ENCODE measurements at regions of chr22 and their contacts with region 1.

Region 1: DNA sequence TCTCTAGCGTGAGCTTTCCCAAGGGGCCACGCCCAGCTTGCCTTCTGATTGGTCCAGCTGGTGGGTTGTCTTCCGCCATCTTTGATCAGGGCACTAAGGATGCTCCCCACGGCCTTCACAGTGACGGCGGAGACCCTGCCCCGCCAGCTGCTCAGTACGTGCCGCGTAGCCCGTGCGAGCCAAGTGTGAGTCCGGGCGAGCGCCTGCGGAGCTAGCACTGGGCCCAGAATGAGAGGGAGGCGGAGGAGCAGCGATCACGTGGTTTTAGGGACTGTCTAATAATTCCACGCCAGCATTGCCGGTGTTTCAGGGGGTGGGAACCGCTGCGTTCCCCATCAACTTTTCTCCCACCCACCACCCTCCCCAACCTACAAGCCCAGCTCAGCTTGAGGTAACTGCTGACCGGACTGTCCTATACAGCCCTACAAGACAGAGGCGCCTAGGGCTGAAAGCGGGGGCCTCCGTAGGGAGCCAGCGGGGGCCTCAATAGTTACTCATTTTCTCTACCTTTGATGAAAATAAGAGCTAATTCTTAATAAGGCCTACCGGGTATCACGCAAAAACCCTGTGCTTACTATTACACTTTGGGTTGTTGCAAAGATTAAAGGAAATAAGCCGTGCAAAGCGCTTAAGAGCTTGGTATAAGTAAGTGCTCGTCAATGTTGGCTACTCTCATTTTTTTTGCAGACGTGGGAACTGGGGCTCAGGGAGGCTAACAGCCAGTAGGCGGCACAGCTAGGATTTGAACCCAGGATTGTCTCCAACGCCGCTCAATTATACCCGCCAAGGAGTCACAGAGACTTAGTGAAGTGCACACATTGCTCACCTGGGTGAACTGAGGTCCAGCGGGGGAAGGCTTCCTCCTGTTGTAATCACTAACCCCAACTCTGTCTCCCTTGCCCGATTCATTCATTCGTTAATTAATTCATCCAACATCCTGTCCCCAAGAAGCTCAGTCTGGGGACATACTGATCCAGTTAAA is 1.3 kb upstream of the MTFP1 start:
- DNase-seq: peak; percentile 99
- H3K4me3 Mint-ChIP-seq: peak overlapping the region; percentile 99
- H3K27ac Mint-ChIP-seq: peak overlapping the region; percentile 99
- H3K4me1 Mint-ChIP-seq: peaks cover 61% of the 10 kb centered on the region
- H3K27me3 Mint-ChIP-seq: no peaks in the 10 kb centered on the region

Region 2: GRCh38 chr22:29603358-29604075 is 820.8 kb before region 1 on chr22 and contains the start of gene NF2:
- intact Hi-C with region 1: loop called (anchors 10 kb)
- DNase-seq: peak; percentile 100
- H3K4me3 Mint-ChIP-seq: peak within 1 kb of the TSS; percentile 91
- H3K27ac Mint-ChIP-seq: peak within 1 kb of the TSS; percentile 98
- H3K4me1 Mint-ChIP-seq: peaks cover 14% of the 10 kb centered on the region
- H3K27me3 Mint-ChIP-seq: no peaks in the 10 kb centered on the region
- total RNA-seq, gene NF2: 59.1 and 61.9 TPM in 2 replicates

Region 3: DNA sequence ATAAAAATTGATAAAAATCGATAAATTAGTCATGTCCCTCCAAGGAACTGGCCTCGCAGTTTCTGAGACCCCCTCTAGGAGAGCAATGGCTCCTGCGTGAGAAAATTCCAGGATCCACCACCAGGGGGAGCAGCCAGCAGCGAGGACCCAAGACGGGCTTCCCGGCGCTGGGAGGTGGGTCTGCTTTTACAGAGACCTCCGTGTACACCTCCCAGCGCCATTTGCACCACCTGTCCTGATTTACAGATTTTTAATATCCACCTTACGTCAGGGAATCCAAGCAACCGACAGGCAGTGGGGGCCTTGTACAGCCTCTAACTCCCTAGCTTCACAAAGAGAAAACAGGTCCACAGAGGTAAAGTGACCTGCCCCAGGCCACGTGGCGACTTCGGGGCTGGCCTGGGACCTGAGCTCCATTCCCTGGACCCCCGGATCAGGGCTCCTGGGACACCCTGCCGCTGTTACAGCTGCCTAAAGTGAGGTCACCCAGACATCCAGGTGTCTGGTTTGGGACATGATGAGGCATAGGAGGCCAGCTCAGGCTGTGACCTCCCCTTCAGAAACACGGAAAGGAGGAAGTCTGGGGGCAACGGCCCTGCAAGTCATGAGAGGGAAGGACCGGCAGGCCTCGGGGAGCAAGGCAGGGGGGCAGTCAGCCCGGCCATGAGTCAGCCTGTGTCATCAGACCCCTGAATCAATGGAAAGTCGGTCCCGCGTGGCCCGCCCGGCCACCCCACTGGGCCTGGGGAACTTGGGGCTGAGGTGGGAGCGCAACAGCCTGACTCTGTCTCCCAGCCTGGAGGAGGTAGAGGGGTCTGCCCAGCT is 161.1 kb before region 1 on chr22:
- intact Hi-C with region 1: loop called (anchors 1 kb)
- DNase-seq: peak; percentile 95
- H3K4me3 Mint-ChIP-seq: peak overlapping the region; percentile 99
- H3K27ac Mint-ChIP-seq: peak overlapping the region; percentile 90
- H3K4me1 Mint-ChIP-seq: peaks cover 59% of the 10 kb centered on the region
- H3K27me3 Mint-ChIP-seq: no peaks in the 10 kb centered on the region

Region 4: GRCh38 chr22:30386960-30387827 is 37.1 kb before region 1 on chr22 and contains the start of gene RNF215:
- intact Hi-C with region 1: loop called (anchors 1 kb)
- DNase-seq: peak; percentile 96
- H3K4me3 Mint-ChIP-seq: peak within 1 kb of the TSS; percentile 86
- H3K27ac Mint-ChIP-seq: peak within 1 kb of the TSS; percentile 79
- H3K4me1 Mint-ChIP-seq: peaks cover 19% of the 10 kb centered on the region
- H3K27me3 Mint-ChIP-seq: no peaks in the 10 kb centered on the region
- total RNA-seq, gene RNF215: 10.4 and 15.2 TPM in 2 replicates

Region 5: GRCh38 chr22:30435674-30436126 is 11.4 kb after region 1 on chr22:
- intact Hi-C with region 1: loop called (anchors 1 kb)
- DNase-seq: peak; percentile 90
- H3K4me3 Mint-ChIP-seq: peak overlapping the region; percentile 79
- H3K27ac Mint-ChIP-seq: peak overlapping the region; percentile 94
- H3K4me1 Mint-ChIP-seq: peaks cover 21% of the 10 kb centered on the region
- H3K27me3 Mint-ChIP-seq: peaks cover 8% of the 10 kb centered on the region

Region 6: DNA sequence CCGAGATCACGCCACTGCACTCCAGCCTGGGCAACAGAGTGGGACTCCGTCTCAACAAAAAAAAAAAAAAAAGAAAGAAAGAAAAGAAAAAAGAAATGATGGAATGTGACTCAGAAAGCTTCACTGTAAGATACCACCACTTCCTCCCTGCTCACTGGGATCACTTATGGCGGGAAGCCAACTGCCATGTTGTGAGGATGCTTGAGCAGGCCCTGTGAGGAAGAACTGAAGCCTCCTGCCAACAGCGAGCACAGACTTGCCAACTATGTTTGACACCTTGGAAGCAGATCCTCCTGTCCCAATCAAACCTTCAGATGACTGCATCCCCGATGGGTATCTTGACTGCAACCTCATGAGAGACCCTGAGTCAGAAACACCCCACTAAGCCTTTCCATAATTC is 114.0 kb after region 1 on chr22:
- intact Hi-C with region 1: no loop called
- DNase-seq: no peak
- H3K4me3 Mint-ChIP-seq: no peak overlapping the region
- H3K27ac Mint-ChIP-seq: no peak overlapping the region
- H3K4me1 Mint-ChIP-seq: peaks cover 2% of the 10 kb centered on the region
- H3K27me3 Mint-ChIP-seq: peaks cover 24% of the 10 kb centered on the region

Region 7: GRCh38 chr22:30591588-30592359 is 167.5 kb after region 1 on chr22 and contains the start of gene PES1:
- intact Hi-C with region 1: loop called (anchors 1 kb)
- DNase-seq: peak; percentile 98
- H3K4me3 Mint-ChIP-seq: no peak within 1 kb of the TSS
- H3K27ac Mint-ChIP-seq: no peak within 1 kb of the TSS
- H3K4me1 Mint-ChIP-seq: no peaks in the 10 kb centered on the region
- H3K27me3 Mint-ChIP-seq: peaks cover 14% of the 10 kb centered on the region
- total RNA-seq, gene PES1: 170 and 173 TPM in 2 replicates

Measured in activated CD4-positive, alpha-beta T cell treated with anti-CD3 and anti-CD28 coated beads, Interleukin-2, amount 10 ng/mL, durations not matched to agents 24 days and 14 days (primary cell).